Endothelial cell of umbilical vein (primary cell): ENCODE measurements at regions of chr18 and their contacts with region 1.

Region 1: GRCh38 chr18:830315-830901 is 18.4 kb upstream of the YES1 start:
- DNase-seq: peak; percentile 96
- H3K4me3 ChIP-seq: peak overlapping the region in 1 of 3 experiments; percentile 25
- H3K27ac ChIP-seq: peak overlapping the region; percentile 91
- H3K4me1 ChIP-seq: peaks cover 16% of the 10 kb centered on the region
- H3K27me3 ChIP-seq: no peaks in the 10 kb centered on the region
- CTCF ChIP-seq: no peak
- POLR2A ChIP-seq: peak; percentile 60

Region 2: GRCh38 chr18:629269-630150 is 200.9 kb before region 1 on chr18:
- CTCF ChIA-PET with region 1: interaction called, 652 read pairs
- POLR2A ChIA-PET with region 1: no interaction called
- dilution Hi-C with region 1: no loop called
- intact Hi-C with region 1: loop called (anchors 1 kb)
- DNase-seq: no peak
- H3K4me3 ChIP-seq: no peak overlapping the region
- H3K27ac ChIP-seq: no peak overlapping the region
- H3K4me1 ChIP-seq: peaks cover 1% of the 10 kb centered on the region
- H3K27me3 ChIP-seq: peaks cover 0 to 2% of the 10 kb centered on the region in 2 experiments
- CTCF ChIP-seq: peak in 1 of 2 donors; percentile 4
- POLR2A ChIP-seq: no peak

Region 3: GRCh38 chr18:731185-731584 is 99.2 kb before region 1 on chr18:
- CTCF ChIA-PET with region 1: interaction called, 301 read pairs
- POLR2A ChIA-PET with region 1: no interaction called
- dilution Hi-C with region 1: loop called (anchors 25 kb)
- intact Hi-C with region 1: no loop called
- DNase-seq: no peak
- H3K4me3 ChIP-seq: no peak overlapping the region
- H3K27ac ChIP-seq: no peak overlapping the region
- H3K4me1 ChIP-seq: no peaks in the 10 kb centered on the region
- H3K27me3 ChIP-seq: no peaks in the 10 kb centered on the region
- CTCF ChIP-seq: no peak
- POLR2A ChIP-seq: no peak

Region 4: DNA sequence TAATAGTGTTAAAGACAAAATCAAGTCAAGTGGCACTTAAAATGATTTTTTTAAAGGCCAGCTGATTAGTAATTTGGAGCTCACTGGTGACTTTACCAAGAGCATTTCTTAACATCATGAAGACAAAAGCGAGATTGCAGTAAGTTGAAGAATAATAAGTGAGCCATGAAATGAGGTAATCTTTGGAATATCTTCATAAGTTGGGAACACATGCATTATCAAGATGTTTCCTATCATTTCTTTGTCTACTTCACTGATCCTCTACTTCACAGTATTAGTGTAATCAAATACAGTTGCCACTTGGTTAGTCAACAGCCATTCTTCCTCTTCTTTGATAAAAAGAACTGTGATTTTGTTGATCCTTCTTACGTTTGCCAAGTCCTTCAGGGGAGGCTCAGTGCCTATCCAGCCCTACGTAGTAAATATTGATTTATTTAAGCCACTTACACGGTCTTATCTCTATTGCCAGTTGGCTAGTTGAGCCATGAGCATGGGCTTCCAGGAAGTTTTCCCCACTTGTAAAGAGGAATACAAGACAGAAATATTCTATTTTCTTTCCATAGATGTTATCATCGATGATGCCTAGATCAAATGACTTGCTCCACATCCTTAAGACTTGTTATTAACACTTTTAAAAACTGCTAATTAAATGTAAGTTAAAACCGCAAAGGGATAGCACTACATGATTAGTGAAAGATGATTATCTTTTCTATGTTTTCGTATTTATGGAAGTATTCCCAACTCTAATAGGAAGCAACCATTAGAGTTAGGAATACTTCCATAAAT is 64.5 kb before region 1 on chr18:
- CTCF ChIA-PET with region 1: interaction called, 15 read pairs
- POLR2A ChIA-PET with region 1: no interaction called
- dilution Hi-C with region 1: no loop called
- intact Hi-C with region 1: no loop called
- DNase-seq: peak; percentile 76
- H3K4me3 ChIP-seq: no peak overlapping the region
- H3K27ac ChIP-seq: no peak overlapping the region
- H3K4me1 ChIP-seq: peaks cover 23% of the 10 kb centered on the region
- H3K27me3 ChIP-seq: no peaks in the 10 kb centered on the region
- CTCF ChIP-seq: no peak
- POLR2A ChIP-seq: no peak

Region 5: GRCh38 chr18:805008-805754 is 25.2 kb before region 1 on chr18:
- CTCF ChIA-PET with region 1: interaction called, 138 read pairs
- POLR2A ChIA-PET with region 1: interaction called, 3 read pairs
- dilution Hi-C with region 1: no loop called
- intact Hi-C with region 1: no loop called
- DNase-seq: peak; percentile 34
- H3K4me3 ChIP-seq: peak overlapping the region in 1 of 3 experiments; percentile 8
- H3K27ac ChIP-seq: no peak overlapping the region
- H3K4me1 ChIP-seq: peaks cover 38% of the 10 kb centered on the region
- H3K27me3 ChIP-seq: no peaks in the 10 kb centered on the region
- CTCF ChIP-seq: no peak
- POLR2A ChIP-seq: no peak

Region 6: DNA sequence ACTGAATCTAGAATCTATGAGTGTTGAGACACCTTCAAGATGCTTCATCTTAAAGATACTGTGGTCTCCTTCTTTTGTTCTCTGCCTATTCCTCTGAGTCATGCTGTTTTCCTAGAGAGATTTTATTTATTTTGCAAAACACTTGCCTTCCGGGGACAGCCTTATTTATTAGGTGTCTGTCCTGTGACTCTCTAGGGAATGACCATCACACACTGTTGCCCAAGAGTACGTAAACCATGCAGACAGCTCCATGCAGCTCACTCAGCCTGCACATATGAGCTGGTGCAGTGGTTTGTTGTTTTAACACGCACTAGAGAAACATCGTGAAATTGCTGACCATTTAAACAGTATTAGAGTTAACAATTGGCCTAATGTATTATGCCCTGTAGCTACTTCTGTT is 61.9 kb after region 1 on chr18:
- CTCF ChIA-PET with region 1: no interaction called
- POLR2A ChIA-PET with region 1: no interaction called
- dilution Hi-C with region 1: no loop called
- intact Hi-C with region 1: no loop called
- DNase-seq: no peak
- H3K4me3 ChIP-seq: no peak overlapping the region
- H3K27ac ChIP-seq: no peak overlapping the region
- H3K4me1 ChIP-seq: no peaks in the 10 kb centered on the region
- H3K27me3 ChIP-seq: peaks cover 2 to 6% of the 10 kb centered on the region in 2 experiments
- CTCF ChIP-seq: no peak
- POLR2A ChIP-seq: no peak

Region 7: GRCh38 chr18:939167-939566 is 108.8 kb after region 1 on chr18:
- CTCF ChIA-PET with region 1: no interaction called
- POLR2A ChIA-PET with region 1: no interaction called
- dilution Hi-C with region 1: no loop called
- intact Hi-C with region 1: no loop called
- DNase-seq: no peak
- H3K4me3 ChIP-seq: no peak overlapping the region
- H3K27ac ChIP-seq: no peak overlapping the region
- H3K4me1 ChIP-seq: no peaks in the 10 kb centered on the region
- H3K27me3 ChIP-seq: no peaks in the 10 kb centered on the region
- CTCF ChIP-seq: no peak
- POLR2A ChIP-seq: no peak

Region 8: GRCh38 chr18:950882-951539 is 120.6 kb after region 1 on chr18:
- CTCF ChIA-PET with region 1: no interaction called
- POLR2A ChIA-PET with region 1: no interaction called
- dilution Hi-C with region 1: no loop called
- intact Hi-C with region 1: no loop called
- DNase-seq: no peak
- H3K4me3 ChIP-seq: no peak overlapping the region
- H3K27ac ChIP-seq: no peak overlapping the region
- H3K4me1 ChIP-seq: no peaks in the 10 kb centered on the region
- H3K27me3 ChIP-seq: peaks cover 0 to 2% of the 10 kb centered on the region in 2 experiments
- CTCF ChIP-seq: no peak
- POLR2A ChIP-seq: no peak